ENCODE measurements at regions of chr10 and their contacts with region 1.

Region 1: DNA sequence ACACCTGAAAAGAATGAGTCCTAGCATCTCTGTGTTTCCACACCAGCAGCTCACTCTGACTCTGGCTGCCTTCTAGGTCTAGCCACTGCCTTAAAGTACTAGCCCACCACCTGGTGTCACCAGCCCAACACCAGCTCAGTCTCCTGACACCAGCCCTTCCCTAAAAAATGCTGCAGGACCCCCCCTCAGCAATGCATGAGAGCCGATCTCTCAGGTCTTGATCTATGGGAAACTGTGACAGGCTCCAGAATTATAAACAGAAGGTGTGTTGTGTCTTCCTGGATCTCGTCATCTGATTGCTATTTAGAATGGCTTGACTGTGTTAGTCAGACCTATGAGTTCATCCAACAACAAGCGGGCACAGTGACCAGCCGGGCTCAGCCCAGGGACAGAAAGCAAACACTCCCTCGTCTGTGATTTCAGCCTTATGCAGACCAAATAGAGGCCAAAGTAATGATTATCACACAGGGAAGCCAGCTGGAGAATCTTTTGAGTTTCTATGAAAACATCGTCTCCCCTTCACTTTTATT is 66.6 kb downstream of the CUBN start:
- DNase-seq: no peak
- ATAC-seq: no peak
- H3K4me3 ChIP-seq: no peak overlapping the region
- H3K4me3 Mint-ChIP-seq: no peak overlapping the region
- H3K27ac ChIP-seq: no peak overlapping the region
- H3K27ac Mint-ChIP-seq: no peak overlapping the region
- H3K4me1 ChIP-seq: peaks cover 8% of the 10 kb centered on the region
- H3K4me1 Mint-ChIP-seq: peaks cover 21% of the 10 kb centered on the region
- H3K27me3 ChIP-seq: no peaks in the 10 kb centered on the region
- H3K27me3 Mint-ChIP-seq: no peaks in the 10 kb centered on the region
- CTCF ChIP-seq: no peak

Region 2: GRCh38 chr10:16984242-16984641 is 78.8 kb before region 1 on chr10:
- CTCF ChIA-PET with region 1: no interaction called
- POLR2A ChIA-PET with region 1: no interaction called
- intact Hi-C with region 1: no loop called
- DNase-seq: no peak
- ATAC-seq: no peak
- H3K4me3 ChIP-seq: no peak overlapping the region
- H3K4me3 Mint-ChIP-seq: no peak overlapping the region
- H3K27ac ChIP-seq: no peak overlapping the region
- H3K27ac Mint-ChIP-seq: no peak overlapping the region
- H3K4me1 ChIP-seq: no peaks in the 10 kb centered on the region
- H3K4me1 Mint-ChIP-seq: no peaks in the 10 kb centered on the region
- H3K27me3 ChIP-seq: no peaks in the 10 kb centered on the region
- H3K27me3 Mint-ChIP-seq: no peaks in the 10 kb centered on the region
- CTCF ChIP-seq: no peak

Region 3: GRCh38 chr10:16995867-16996529 is 67.0 kb before region 1 on chr10:
- CTCF ChIA-PET with region 1: no interaction called
- POLR2A ChIA-PET with region 1: no interaction called
- intact Hi-C with region 1: loop called (anchors 2 to 10 kb)
- DNase-seq: peak in 2 of 9 experiments; percentile 35 to 52
- ATAC-seq: peak; percentile 40
- H3K4me3 ChIP-seq: no peak overlapping the region
- H3K4me3 Mint-ChIP-seq: peak overlapping the region; percentile 40
- H3K27ac ChIP-seq: peak overlapping the region in 1 of 2 experiments; percentile 20
- H3K27ac Mint-ChIP-seq: peak overlapping the region; percentile 65
- H3K4me1 ChIP-seq: peaks cover 11% of the 10 kb centered on the region
- H3K4me1 Mint-ChIP-seq: peaks cover 13% of the 10 kb centered on the region
- H3K27me3 ChIP-seq: no peaks in the 10 kb centered on the region
- H3K27me3 Mint-ChIP-seq: no peaks in the 10 kb centered on the region
- CTCF ChIP-seq: no peak

Region 4: DNA sequence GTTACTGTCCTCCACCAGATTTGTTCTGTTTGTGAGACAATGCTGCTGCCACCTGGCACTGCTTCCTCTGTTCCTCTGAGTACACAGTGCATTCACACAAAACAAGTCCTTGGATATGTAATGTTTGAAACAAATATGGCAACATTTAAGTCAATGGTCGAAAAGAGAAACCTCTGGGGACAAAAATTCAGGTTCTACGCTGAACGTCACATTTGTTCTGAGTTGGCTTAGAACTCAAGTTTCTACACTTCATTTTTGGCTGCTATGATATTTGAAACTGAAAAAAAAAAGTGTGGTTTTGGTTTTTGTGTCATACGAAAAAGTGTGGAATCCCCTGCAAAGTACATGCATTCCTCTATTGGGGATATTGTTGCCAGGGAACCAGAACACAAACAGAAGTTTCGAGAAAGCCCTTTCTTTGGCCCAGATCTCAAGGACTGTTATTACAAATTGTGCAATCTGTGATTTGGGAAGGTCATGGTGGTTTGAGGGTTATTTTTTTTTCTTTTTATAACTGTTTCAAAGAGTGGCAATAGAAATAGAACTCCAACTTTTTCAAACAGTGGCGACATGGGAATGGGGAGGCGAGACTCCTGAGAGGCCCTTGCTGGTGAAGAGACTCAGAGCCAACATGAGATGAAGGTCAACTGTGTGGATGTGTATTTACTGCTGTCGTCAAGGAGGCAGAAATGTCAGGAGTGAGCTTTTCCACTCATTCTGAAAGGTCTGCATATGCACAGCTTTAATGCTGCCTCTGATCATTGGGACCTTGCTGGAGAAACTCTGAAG is 60.9 kb before region 1 on chr10:
- CTCF ChIA-PET with region 1: no interaction called
- POLR2A ChIA-PET with region 1: no interaction called
- intact Hi-C with region 1: loop called in 1 of 2 experiments (anchors 10 kb)
- DNase-seq: peak in 5 of 9 experiments; percentile 21 to 92 (median 43)
- ATAC-seq: peak; percentile 22
- H3K4me3 ChIP-seq: no peak overlapping the region
- H3K4me3 Mint-ChIP-seq: no peak overlapping the region
- H3K27ac ChIP-seq: peak overlapping the region; percentile 33 to 40
- H3K27ac Mint-ChIP-seq: peak overlapping the region; percentile 87
- H3K4me1 ChIP-seq: peaks cover 41% of the 10 kb centered on the region
- H3K4me1 Mint-ChIP-seq: peaks cover 47% of the 10 kb centered on the region
- H3K27me3 ChIP-seq: no peaks in the 10 kb centered on the region
- H3K27me3 Mint-ChIP-seq: no peaks in the 10 kb centered on the region
- CTCF ChIP-seq: no peak

Region 5: DNA sequence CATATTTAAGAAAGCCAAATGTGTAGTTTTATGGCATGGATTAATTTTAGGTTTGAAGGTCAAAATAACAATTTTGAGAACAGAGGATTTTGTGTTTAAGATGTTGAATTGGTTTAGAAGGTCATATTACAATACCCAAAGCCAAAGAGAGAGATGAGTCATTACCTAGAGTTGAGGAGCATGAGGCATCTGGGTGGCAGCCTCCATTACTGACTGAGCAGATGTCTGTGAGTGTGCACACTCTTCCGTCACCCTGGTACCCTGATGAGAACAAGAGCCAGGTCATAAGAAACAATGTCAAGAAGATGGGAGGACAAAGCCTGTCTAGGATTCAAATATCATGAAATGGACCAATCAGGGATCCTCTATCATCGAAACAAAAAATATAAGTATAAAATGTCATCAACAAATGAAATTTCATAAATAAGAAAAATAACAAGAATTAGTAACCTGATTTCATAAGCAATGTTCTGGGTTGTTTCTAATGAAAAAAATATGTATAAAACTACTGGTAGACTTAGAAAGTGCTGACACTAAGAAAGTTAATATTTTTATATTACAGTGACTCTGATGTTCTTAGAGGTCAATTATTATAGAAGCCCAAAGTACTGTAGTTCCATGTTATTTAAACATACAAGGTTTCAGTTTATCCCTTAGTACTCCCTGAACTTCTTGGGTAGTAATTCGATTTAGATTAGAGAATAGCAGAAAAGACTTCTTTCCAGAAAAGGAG is 46.6 kb after region 1 on chr10:
- CTCF ChIA-PET with region 1: no interaction called
- POLR2A ChIA-PET with region 1: no interaction called
- intact Hi-C with region 1: no loop called
- DNase-seq: no peak
- ATAC-seq: no peak
- H3K4me3 ChIP-seq: no peak overlapping the region
- H3K4me3 Mint-ChIP-seq: no peak overlapping the region
- H3K27ac ChIP-seq: no peak overlapping the region
- H3K27ac Mint-ChIP-seq: no peak overlapping the region
- H3K4me1 ChIP-seq: no peaks in the 10 kb centered on the region
- H3K4me1 Mint-ChIP-seq: no peaks in the 10 kb centered on the region
- H3K27me3 ChIP-seq: no peaks in the 10 kb centered on the region
- H3K27me3 Mint-ChIP-seq: no peaks in the 10 kb centered on the region
- CTCF ChIP-seq: no peak